Activated CD4-positive, alpha-beta T cell treated with anti-CD3 and anti-CD28 coated beads, Interleukin-2, amount 10 ng/mL, durations not matched to agents 7 days and 5 days (primary cell): ENCODE measurements at regions of chr12 and their contacts with region 1.

Region 1: GRCh38 chr12:122471324-122472226 is 29.2 kb downstream of the ZCCHC8 start:
- DNase-seq: peak; percentile 53
- H3K4me3 Mint-ChIP-seq: no peak overlapping the region
- H3K27ac Mint-ChIP-seq: no peak overlapping the region
- H3K4me1 Mint-ChIP-seq: peaks cover 25% of the 10 kb centered on the region
- H3K27me3 Mint-ChIP-seq: no peaks in the 10 kb centered on the region

Region 2: DNA sequence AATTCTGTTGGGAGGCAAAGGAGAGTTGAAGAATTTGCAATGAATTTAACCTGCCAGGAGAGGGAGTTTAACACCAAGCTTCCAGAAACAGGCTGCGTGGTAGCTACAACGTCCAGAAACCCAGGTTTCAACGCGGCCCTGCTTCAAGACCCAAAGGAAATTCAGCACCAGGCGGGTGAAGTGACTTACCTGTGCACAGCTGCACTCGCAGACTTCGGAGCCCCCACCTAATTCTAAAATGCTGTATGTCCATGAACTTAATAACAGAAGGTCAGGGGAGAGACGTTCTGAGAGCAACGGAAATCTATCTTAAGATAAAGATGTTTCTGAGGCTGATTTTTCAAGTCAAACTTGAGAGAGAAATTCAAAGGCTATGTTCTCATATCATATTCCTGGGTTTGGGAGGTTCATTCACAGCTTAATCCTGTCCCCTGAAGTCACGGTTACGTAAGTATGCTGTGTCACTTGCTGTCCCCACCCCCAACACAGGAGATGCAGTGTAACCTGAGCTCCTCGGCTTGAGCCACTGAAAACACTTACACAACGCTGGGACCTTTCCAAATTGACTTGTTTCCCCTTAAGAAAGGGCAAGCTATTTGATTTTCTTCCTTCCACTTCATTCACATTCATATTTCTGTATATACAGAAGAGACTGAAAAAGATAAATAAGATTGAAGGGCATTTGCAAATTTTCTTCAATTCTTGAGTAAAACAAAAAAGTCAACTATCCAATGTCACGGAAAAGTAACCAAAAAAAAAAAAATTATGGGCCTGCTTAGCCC is 71.8 kb before region 1 on chr12:
- CTCF ChIA-PET with region 1: interaction called, 19 read pairs
- POLR2A ChIA-PET with region 1: interaction called, 4 read pairs
- DNase-seq: peak; percentile 71
- H3K4me3 Mint-ChIP-seq: peak overlapping the region; percentile 41
- H3K27ac Mint-ChIP-seq: peak overlapping the region; percentile 85
- H3K4me1 Mint-ChIP-seq: peaks cover 48% of the 10 kb centered on the region
- H3K27me3 Mint-ChIP-seq: no peaks in the 10 kb centered on the region

Region 3: GRCh38 chr12:122483969-122484368 is 12.4 kb after region 1 on chr12:
- CTCF ChIA-PET with region 1: interaction called, 19 read pairs
- POLR2A ChIA-PET with region 1: no interaction called
- DNase-seq: no peak
- H3K4me3 Mint-ChIP-seq: no peak overlapping the region
- H3K27ac Mint-ChIP-seq: peak overlapping the region; percentile 46
- H3K4me1 Mint-ChIP-seq: peaks cover 7% of the 10 kb centered on the region
- H3K27me3 Mint-ChIP-seq: no peaks in the 10 kb centered on the region

Region 4: GRCh38 chr12:122491991-122492390 is 20.4 kb after region 1 on chr12:
- CTCF ChIA-PET with region 1: interaction called, 19 read pairs
- POLR2A ChIA-PET with region 1: no interaction called
- DNase-seq: no peak
- H3K4me3 Mint-ChIP-seq: no peak overlapping the region
- H3K27ac Mint-ChIP-seq: no peak overlapping the region
- H3K4me1 Mint-ChIP-seq: peaks cover 11% of the 10 kb centered on the region
- H3K27me3 Mint-ChIP-seq: no peaks in the 10 kb centered on the region